Activated T-helper 1 cell treated with anti-CD3 and anti-CD28 coated beads, Interleukin-12 subunit alpha, Interleukin-12 subunit beta, Interleukin-2, Interleukin-4 antibody, amounts not matched to agents 30 ng/mL and 10 ng/mL and 1 ng/mL, durations not matched to agents 14 hours and 24 hours and 36 hours (primary cell): ENCODE measurements at regions of chr4 and their contacts with region 1.

Region 1: GRCh38 chr4:112302320-112303274 is 5.4 kb downstream of the ALPK1 start:
- DNase-seq: no peak
- H3K4me3 Mint-ChIP-seq: no peak overlapping the region
- H3K27ac Mint-ChIP-seq: no peak overlapping the region
- H3K4me1 Mint-ChIP-seq: peaks cover 32% of the 10 kb centered on the region
- H3K27me3 Mint-ChIP-seq: no peaks in the 10 kb centered on the region

Region 2: GRCh38 chr4:112266821-112267220 is 35.8 kb before region 1 on chr4:
- intact Hi-C with region 1: loop called (anchors 2 kb)
- DNase-seq: no peak
- H3K4me3 Mint-ChIP-seq: no peak overlapping the region
- H3K27ac Mint-ChIP-seq: no peak overlapping the region
- H3K4me1 Mint-ChIP-seq: peaks cover 14% of the 10 kb centered on the region
- H3K27me3 Mint-ChIP-seq: no peaks in the 10 kb centered on the region

Region 3: GRCh38 chr4:112321776-112322684 is 19.4 kb after region 1 on chr4:
- intact Hi-C with region 1: loop called (anchors 1 kb)
- DNase-seq: peak; percentile 64
- H3K4me3 Mint-ChIP-seq: no peak overlapping the region
- H3K27ac Mint-ChIP-seq: no peak overlapping the region
- H3K4me1 Mint-ChIP-seq: peaks cover 52% of the 10 kb centered on the region
- H3K27me3 Mint-ChIP-seq: no peaks in the 10 kb centered on the region

Region 4: GRCh38 chr4:112736718-112737135 is 434.1 kb after region 1 on chr4:
- intact Hi-C with region 1: no loop called
- DNase-seq: no peak
- H3K4me3 Mint-ChIP-seq: no peak overlapping the region
- H3K27ac Mint-ChIP-seq: peak overlapping the region; percentile 79
- H3K4me1 Mint-ChIP-seq: peaks cover 23% of the 10 kb centered on the region
- H3K27me3 Mint-ChIP-seq: no peaks in the 10 kb centered on the region